Endothelial cell of umbilical vein (primary cell): ENCODE measurements at regions of chr11 and their contacts with region 1.

Region 1: DNA sequence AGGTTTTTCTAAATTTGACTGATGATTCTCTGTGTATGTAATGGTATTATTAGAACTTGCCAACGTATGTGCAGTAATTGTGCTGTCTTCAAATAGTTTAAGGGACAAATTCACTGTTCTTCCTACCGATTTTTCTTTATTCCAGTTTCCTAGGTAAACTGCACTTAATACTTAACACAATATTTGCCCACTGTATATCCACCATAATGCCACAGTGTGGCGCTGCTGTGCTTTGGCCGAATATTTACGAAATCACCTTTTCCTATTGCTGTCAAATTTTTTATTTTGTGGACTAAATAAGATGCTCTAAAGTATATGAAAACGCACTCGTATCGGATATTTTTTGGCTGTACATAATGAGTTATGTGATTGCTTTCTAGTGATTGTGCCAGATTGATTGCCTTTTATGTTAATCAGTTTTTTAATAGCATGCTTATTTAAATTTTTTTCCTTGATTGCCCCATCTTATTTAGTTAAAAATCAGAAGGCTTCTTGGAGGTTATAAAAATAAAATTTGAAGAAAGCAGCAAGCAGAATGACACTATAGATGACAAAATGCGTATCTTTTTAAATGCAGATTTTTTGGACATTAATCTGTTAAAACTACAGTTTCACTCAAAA is 10.5 kb downstream of the AASDHPPT start:
- DNase-seq: peak; percentile 72
- H3K4me3 ChIP-seq: no peak overlapping the region
- H3K27ac ChIP-seq: no peak overlapping the region
- H3K4me1 ChIP-seq: no peaks in the 10 kb centered on the region
- H3K27me3 ChIP-seq: no peaks in the 10 kb centered on the region
- CTCF ChIP-seq: peak; percentile 64 to 68
- POLR2A ChIP-seq: no peak

Region 2: GRCh38 chr11:105588001-105588400 is 499.9 kb before region 1 on chr11:
- CTCF ChIA-PET with region 1: no interaction called
- POLR2A ChIA-PET with region 1: no interaction called
- dilution Hi-C with region 1: no loop called
- intact Hi-C with region 1: no loop called
- DNase-seq: peak; percentile 14
- H3K4me3 ChIP-seq: no peak overlapping the region
- H3K27ac ChIP-seq: no peak overlapping the region
- H3K4me1 ChIP-seq: no peaks in the 10 kb centered on the region
- H3K27me3 ChIP-seq: no peaks in the 10 kb centered on the region
- CTCF ChIP-seq: no peak
- POLR2A ChIP-seq: no peak

Region 3: GRCh38 chr11:106098893-106099553 is 11.1 kb after region 1 on chr11:
- CTCF ChIA-PET with region 1: interaction called, 10 read pairs
- POLR2A ChIA-PET with region 1: no interaction called
- dilution Hi-C with region 1: no loop called
- intact Hi-C with region 1: no loop called
- DNase-seq: no peak
- H3K4me3 ChIP-seq: no peak overlapping the region
- H3K27ac ChIP-seq: no peak overlapping the region
- H3K4me1 ChIP-seq: no peaks in the 10 kb centered on the region
- H3K27me3 ChIP-seq: no peaks in the 10 kb centered on the region
- CTCF ChIP-seq: no peak
- POLR2A ChIP-seq: no peak

Region 4: DNA sequence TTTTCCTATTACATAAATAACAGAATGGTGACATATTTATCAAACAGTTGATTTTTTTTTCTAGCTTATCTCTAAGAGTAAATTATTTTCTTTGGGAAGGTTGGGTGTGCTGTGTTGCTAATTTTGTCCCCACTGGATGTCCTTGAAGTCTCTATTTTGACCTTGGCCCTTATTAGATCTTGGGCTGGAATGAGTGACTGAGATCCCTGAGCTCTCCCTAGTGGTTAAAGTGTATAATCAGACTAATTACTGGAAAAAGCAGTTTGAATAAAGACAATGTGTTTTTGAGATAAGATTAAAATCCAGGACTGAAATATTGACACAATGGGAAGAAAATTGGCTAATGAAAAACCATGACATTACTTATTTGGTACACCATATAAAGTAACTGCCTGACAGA is 45.6 kb after region 1 on chr11:
- CTCF ChIA-PET with region 1: interaction called, 6 read pairs
- POLR2A ChIA-PET with region 1: no interaction called
- dilution Hi-C with region 1: no loop called
- intact Hi-C with region 1: loop called (anchors 1 kb)
- DNase-seq: peak; percentile 3
- H3K4me3 ChIP-seq: no peak overlapping the region
- H3K27ac ChIP-seq: no peak overlapping the region
- H3K4me1 ChIP-seq: no peaks in the 10 kb centered on the region
- H3K27me3 ChIP-seq: no peaks in the 10 kb centered on the region
- CTCF ChIP-seq: no peak
- POLR2A ChIP-seq: no peak

Region 5: GRCh38 chr11:107017433-107018227 is 929.7 kb after region 1 on chr11:
- CTCF ChIA-PET with region 1: interaction called, 4 read pairs
- POLR2A ChIA-PET with region 1: no interaction called
- dilution Hi-C with region 1: no loop called
- intact Hi-C with region 1: loop called (anchors 5 kb)
- DNase-seq: peak; percentile 7
- H3K4me3 ChIP-seq: peak overlapping the region; percentile 20 to 45 (median 23)
- H3K27ac ChIP-seq: no peak overlapping the region
- H3K4me1 ChIP-seq: peaks cover 4% of the 10 kb centered on the region
- H3K27me3 ChIP-seq: peaks cover 14 to 23% of the 10 kb centered on the region in 2 experiments
- CTCF ChIP-seq: peak; percentile 24 to 53
- POLR2A ChIP-seq: no peak